Sigmoid colon (tissue), 7 donors: ENCODE measurements at regions of chr4 and their contacts with region 1.

Region 1: DNA sequence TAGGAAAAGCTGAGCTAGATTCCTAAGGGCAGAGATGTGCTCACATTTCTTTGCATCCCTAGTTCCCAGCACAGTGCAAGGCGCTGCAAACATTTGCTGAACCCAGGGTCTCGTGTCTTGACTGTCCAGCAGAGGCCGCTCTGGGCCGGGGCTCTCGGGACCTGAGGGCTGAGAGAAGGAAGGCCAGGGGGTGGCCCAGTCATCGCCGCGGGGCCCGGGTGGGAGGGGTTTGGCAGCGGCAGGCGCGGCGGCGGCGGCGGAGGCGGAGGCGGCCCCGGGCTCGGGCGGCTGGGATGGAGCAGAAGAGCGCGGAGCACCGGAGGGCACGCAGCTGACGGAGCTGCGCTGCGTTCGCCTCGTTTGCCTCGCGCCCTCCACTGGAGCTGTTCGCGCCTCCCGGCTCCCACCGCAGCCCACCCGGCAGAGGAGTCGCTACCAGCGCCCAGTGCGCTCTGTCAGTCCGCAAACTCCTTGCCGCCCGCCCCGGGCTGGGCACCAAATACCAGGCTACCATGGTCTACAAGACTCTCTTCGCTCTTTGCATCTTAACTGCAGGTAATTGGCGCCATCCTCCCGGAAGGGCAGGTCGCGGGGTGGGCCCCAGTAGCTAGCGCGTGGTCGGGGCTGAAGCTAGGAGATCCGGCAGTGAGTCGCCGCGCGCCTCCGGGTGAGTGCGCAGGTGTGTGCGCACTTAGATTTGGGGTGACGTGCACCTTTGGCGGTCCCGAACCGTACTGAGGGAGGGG is at the start of gene PARM1:
- DNase-seq: peak; percentile 95
- H3K4me3 ChIP-seq: peak within 1 kb of the TSS; percentile 53 to 78 (median 72)
- H3K27ac ChIP-seq: peak within 1 kb of the TSS; percentile 76 to 81 (median 78)
- H3K4me1 ChIP-seq: peaks cover 0 to 22% (median 13%) of the 10 kb centered on the region in 4 donors
- H3K27me3 ChIP-seq: no peaks in the 10 kb centered on the region
- CTCF ChIP-seq: peak; percentile 55 to 73 (median 58)
- EP300 ChIP-seq: no peak
- POLR2A ChIP-seq: peak in 1 of 2 donors; percentile 26
- total RNA-seq, gene PARM1: 21.9 to 60.9 (median 50.8) TPM

Region 2: DNA sequence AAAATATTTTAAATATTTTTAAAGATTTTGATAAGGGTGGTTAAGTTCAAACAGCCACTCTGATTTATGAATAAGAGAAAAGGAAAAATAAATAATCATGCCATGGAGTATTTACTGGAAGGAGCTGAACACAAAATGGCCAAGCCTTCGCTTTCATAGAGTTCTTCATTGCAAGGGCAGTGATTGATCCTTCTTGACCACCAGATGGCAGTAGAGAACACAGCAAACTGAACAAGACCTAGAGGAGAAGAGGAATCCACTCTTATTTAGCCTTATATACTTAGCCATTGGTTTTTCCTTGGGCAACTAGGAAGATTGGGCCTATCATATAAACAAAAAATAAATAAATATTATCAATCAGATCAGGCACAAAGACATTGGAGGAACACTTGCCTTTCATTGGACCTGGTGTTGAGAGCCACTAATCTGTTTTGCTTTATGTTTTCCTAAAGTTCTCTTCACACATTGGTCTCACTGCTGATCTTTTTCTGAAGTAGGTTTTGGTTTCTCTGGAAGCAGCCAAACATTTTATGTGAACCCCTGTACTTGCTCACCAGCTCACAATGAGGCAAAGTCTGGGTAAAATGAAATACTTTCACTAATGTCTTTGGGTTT is 58.1 kb before region 1 on chr4:
- intact Hi-C with region 1: loop called (anchors 5 kb)
- DNase-seq: no peak
- H3K4me3 ChIP-seq: no peak overlapping the region
- H3K27ac ChIP-seq: no peak overlapping the region
- H3K4me1 ChIP-seq: peaks cover 0 to 20% (median 16%) of the 10 kb centered on the region in 4 donors
- H3K27me3 ChIP-seq: no peaks in the 10 kb centered on the region
- CTCF ChIP-seq: peak; percentile 41 to 88 (median 64)
- EP300 ChIP-seq: no peak
- POLR2A ChIP-seq: no peak

Region 3: GRCh38 chr4:75287738-75288517 is 354.9 kb after region 1 on chr4:
- intact Hi-C with region 1: loop called (anchors 2 kb)
- DNase-seq: no peak
- H3K4me3 ChIP-seq: no peak overlapping the region
- H3K27ac ChIP-seq: no peak overlapping the region
- H3K4me1 ChIP-seq: peaks cover 0 to 6% (median 0%) of the 10 kb centered on the region in 4 donors
- H3K27me3 ChIP-seq: no peaks in the 10 kb centered on the region
- CTCF ChIP-seq: no peak
- EP300 ChIP-seq: no peak
- POLR2A ChIP-seq: no peak

Region 4: DNA sequence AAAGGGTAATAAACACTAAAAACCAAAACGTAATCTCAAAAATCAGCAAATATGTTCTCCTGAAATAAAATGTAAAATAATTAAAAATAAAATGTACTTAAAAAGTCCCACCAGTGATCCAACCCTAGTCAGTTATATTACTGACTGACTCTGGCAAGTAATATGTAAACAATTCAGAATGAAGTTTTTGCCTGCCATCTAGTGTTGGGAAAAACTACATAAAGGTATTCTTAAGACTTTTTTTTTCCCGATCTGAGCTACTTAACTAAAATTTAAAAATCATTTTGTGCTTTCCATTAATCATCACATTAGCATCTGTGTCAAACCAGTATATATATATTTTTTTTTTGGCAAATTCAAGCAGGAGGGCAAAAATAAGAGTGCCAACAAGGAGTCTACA is 557.2 kb after region 1 on chr4:
- intact Hi-C with region 1: loop called (anchors 5 kb)
- DNase-seq: no peak
- H3K4me3 ChIP-seq: no peak overlapping the region
- H3K27ac ChIP-seq: no peak overlapping the region
- H3K4me1 ChIP-seq: peaks cover 0 to 11% (median 5%) of the 10 kb centered on the region in 4 donors
- H3K27me3 ChIP-seq: no peaks in the 10 kb centered on the region
- CTCF ChIP-seq: peak in 1 of 4 experiments; percentile 10
- EP300 ChIP-seq: no peak
- POLR2A ChIP-seq: no peak

Region 5: DNA sequence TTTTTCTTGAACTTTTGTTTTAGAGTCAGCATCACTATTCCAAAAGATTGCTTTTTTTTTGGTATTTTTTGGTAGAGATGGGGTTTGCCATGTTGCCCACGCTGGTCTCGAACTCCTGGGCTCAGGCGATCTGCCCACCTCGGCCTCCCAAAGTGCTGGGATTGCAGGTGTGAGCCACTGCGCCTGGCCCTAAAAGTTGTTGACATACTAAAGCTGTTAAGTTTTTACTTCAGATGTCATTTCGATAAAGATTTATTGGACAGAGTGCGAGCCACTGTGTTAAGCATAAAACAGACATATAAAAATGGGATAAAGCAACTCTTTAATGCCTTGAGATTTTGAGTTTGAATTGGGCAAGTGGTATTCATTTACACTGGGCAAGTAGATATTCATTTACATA is 819.6 kb after region 1 on chr4:
- intact Hi-C with region 1: no loop called
- DNase-seq: no peak
- H3K4me3 ChIP-seq: no peak overlapping the region
- H3K27ac ChIP-seq: no peak overlapping the region
- H3K4me1 ChIP-seq: no peaks in the 10 kb centered on the region
- H3K27me3 ChIP-seq: no peaks in the 10 kb centered on the region
- CTCF ChIP-seq: no peak
- EP300 ChIP-seq: no peak
- POLR2A ChIP-seq: no peak